Endothelial cell of umbilical vein (primary cell): ENCODE measurements at regions of chr11 and their contacts with region 1.

Region 1: DNA sequence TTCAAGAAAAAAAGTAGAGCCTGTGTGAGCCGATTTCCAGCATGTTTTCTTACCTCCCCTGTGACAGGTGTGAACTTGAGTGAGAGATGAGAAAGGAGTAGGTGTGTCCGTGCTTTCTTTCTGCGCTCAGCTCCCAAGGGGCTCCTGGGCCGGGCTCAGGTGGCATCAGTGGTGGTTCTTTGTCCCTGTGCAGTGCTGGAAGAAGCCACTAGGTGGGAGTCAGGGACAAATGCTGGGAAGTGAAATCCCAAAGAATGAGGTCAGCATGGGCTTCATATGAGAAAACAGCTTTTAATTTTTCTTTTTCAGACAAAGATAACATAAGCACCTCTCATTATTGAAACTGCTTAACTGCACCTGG is 57.8 kb downstream of the PPFIBP2 start:
- DNase-seq: peak; percentile 78
- H3K4me3 ChIP-seq: no peak overlapping the region
- H3K27ac ChIP-seq: no peak overlapping the region
- H3K4me1 ChIP-seq: peaks cover 6% of the 10 kb centered on the region
- H3K27me3 ChIP-seq: peaks cover 32 to 37% of the 10 kb centered on the region in 2 experiments
- CTCF ChIP-seq: peak; percentile 90 to 96
- POLR2A ChIP-seq: no peak

Region 2: DNA sequence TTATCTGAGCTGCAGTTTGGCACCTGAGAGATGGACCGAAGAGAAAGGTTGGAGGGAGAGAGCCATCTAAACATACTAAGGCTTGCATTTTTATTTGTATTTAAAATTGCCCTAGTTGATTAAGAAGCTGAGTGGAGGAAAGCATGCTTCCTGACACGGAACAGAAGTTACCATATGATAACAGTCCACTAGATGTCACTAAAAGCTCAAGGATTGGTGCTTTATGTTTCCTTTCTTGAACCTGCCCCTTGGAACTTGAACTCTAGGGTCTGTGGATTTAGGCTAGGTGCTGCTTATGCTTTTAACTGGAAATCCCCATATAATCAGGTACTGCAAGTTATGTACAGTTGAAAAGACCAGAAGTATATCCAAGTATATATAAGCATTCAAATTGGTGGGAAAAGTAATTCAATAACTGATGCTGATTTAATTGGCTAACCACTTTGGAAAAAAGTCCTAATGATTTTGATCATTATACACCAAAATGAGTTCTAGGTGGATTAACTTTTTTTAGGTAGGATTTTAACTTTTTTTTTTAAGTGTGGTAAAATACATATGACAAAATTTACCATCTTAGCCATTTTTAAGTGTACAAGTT is 473.3 kb before region 1 on chr11:
- CTCF ChIA-PET with region 1: interaction called, 7 read pairs
- POLR2A ChIA-PET with region 1: no interaction called
- dilution Hi-C with region 1: no loop called
- intact Hi-C with region 1: loop called (anchors 5 kb)
- DNase-seq: peak; percentile 67
- H3K4me3 ChIP-seq: no peak overlapping the region
- H3K27ac ChIP-seq: no peak overlapping the region
- H3K4me1 ChIP-seq: no peaks in the 10 kb centered on the region
- H3K27me3 ChIP-seq: peaks cover 0 to 11% of the 10 kb centered on the region in 2 experiments
- CTCF ChIP-seq: peak; percentile 37 to 51
- POLR2A ChIP-seq: no peak

Region 3: GRCh38 chr11:7559398-7560283 is 12.0 kb before region 1 on chr11:
- CTCF ChIA-PET with region 1: interaction called, 13 read pairs
- POLR2A ChIA-PET with region 1: no interaction called
- dilution Hi-C with region 1: no loop called
- intact Hi-C with region 1: no loop called
- DNase-seq: no peak
- H3K4me3 ChIP-seq: no peak overlapping the region
- H3K27ac ChIP-seq: no peak overlapping the region
- H3K4me1 ChIP-seq: no peaks in the 10 kb centered on the region
- H3K27me3 ChIP-seq: peaks cover 2 to 5% of the 10 kb centered on the region in 2 experiments
- CTCF ChIP-seq: no peak
- POLR2A ChIP-seq: no peak

Region 4: DNA sequence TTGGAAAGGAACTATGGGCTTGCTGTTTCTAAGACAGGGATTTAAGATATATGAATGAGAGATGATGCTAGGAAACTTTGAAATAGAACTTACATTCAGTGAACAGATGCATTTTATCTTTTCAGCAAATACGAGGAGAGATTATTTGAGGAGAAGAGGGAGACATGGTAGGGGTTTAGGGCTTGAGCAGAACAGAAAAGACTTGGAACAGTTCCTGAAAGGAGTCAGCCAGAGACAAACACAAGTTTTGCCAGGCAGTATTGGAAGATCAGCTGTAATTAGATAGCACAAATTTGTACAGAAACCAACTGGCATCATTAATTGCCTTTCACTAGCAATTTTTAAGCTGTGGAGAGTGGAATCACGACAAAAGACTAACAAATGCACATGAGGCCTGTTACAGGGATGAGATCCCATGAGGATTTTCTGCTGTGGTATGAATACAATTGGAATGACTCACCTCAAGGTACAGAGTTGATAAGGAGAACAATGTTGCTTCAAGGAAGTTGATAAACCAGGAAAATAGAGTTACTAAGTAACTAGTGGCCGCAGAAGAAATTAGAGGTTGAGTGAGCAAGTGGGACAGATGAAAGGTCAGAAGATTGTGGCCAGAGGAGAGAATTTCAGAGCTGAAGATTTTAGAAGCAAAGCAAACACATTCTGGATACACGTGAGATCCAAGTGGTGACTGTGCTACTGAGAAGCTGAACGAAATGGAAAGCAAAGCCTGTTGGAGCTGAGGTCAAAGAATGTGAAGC is 33.7 kb after region 1 on chr11:
- CTCF ChIA-PET with region 1: interaction called, 41 read pairs
- POLR2A ChIA-PET with region 1: no interaction called
- dilution Hi-C with region 1: no loop called
- intact Hi-C with region 1: no loop called
- DNase-seq: peak; percentile 98
- H3K4me3 ChIP-seq: peak overlapping the region in 1 of 3 experiments; percentile 1
- H3K27ac ChIP-seq: peak overlapping the region; percentile 85
- H3K4me1 ChIP-seq: peaks cover 35% of the 10 kb centered on the region
- H3K27me3 ChIP-seq: no peaks in the 10 kb centered on the region
- CTCF ChIP-seq: no peak
- POLR2A ChIP-seq: peak; percentile 78

Region 5: GRCh38 chr11:7642742-7643141 is 71.1 kb after region 1 on chr11:
- CTCF ChIA-PET with region 1: interaction called, 34 read pairs
- POLR2A ChIA-PET with region 1: no interaction called
- dilution Hi-C with region 1: no loop called
- intact Hi-C with region 1: no loop called
- DNase-seq: no peak
- H3K4me3 ChIP-seq: no peak overlapping the region
- H3K27ac ChIP-seq: no peak overlapping the region
- H3K4me1 ChIP-seq: peaks cover 2% of the 10 kb centered on the region
- H3K27me3 ChIP-seq: no peaks in the 10 kb centered on the region
- CTCF ChIP-seq: no peak
- POLR2A ChIP-seq: no peak

Region 6: DNA sequence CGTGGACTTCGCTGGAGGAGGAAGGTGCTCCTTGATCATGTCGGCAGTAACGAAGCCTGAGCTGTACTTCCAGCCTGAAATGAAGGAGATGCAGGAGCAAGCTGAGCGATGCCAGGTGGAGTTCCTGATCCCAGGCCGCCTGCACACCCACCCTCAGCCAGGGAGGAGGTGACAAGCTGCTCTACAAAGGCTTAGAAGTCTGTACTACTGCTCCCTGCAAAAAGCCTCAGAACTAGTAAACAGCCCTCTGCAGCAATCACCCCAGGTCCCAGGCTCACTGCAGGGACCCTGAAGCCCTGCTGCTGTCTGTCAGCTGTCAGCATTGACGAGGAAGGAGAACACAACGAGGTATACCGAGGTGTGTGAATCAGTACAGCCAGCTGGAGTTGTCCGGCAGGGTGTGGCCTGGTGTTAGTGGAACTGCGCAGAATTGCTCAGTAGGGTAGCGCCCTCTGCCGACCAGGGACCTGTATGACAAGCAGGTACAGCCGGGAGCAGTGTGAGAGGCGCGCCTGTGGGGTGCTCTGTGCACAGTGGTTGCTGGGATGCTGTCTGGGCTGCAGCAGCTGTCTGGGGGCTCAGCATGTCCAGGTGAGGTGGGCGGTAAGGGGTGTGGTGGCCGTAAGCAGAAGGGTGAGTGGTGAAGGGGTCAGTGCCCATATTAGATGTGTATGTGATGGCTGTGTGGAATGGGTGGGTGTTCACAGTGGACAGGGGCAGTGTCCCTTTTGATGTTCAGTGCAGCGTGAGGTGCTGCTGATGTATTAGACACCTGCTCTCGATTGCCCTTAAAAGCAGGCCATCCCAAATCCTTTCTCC is 94.1 kb after region 1 on chr11:
- CTCF ChIA-PET with region 1: interaction called, 225 read pairs
- POLR2A ChIA-PET with region 1: no interaction called
- dilution Hi-C with region 1: no loop called
- intact Hi-C with region 1: loop called (anchors 1 kb)
- DNase-seq: peak; percentile 69
- H3K4me3 ChIP-seq: no peak overlapping the region
- H3K27ac ChIP-seq: no peak overlapping the region
- H3K4me1 ChIP-seq: no peaks in the 10 kb centered on the region
- H3K27me3 ChIP-seq: no peaks in the 10 kb centered on the region
- CTCF ChIP-seq: peak; percentile 79 to 94
- POLR2A ChIP-seq: no peak

Region 7: GRCh38 chr11:7694235-7694634 is 122.6 kb after region 1 on chr11:
- CTCF ChIA-PET with region 1: interaction called, 25 read pairs
- POLR2A ChIA-PET with region 1: no interaction called
- dilution Hi-C with region 1: no loop called
- intact Hi-C with region 1: no loop called
- DNase-seq: no peak
- H3K4me3 ChIP-seq: no peak overlapping the region
- H3K27ac ChIP-seq: no peak overlapping the region
- H3K4me1 ChIP-seq: no peaks in the 10 kb centered on the region
- H3K27me3 ChIP-seq: peaks cover 37 to 40% of the 10 kb centered on the region in 2 experiments
- CTCF ChIP-seq: no peak
- POLR2A ChIP-seq: no peak